Activated CD4-positive, alpha-beta memory T cell treated with anti-CD3 and anti-CD28 coated beads, Interleukin-2, amount 10 ng/mL, durations not matched to agents 7 days and 5 days (primary cell): ENCODE measurements at regions of chr1 and their contacts with region 1.

Region 1: GRCh38 chr1:52683367-52683940 is 14.7 kb downstream of the COA7 start:
- DNase-seq: no peak
- H3K4me3 Mint-ChIP-seq: no peak overlapping the region
- H3K27ac Mint-ChIP-seq: peak overlapping the region; percentile 0
- H3K4me1 Mint-ChIP-seq: peaks cover 16% of the 10 kb centered on the region
- H3K27me3 Mint-ChIP-seq: no peaks in the 10 kb centered on the region

Region 2: DNA sequence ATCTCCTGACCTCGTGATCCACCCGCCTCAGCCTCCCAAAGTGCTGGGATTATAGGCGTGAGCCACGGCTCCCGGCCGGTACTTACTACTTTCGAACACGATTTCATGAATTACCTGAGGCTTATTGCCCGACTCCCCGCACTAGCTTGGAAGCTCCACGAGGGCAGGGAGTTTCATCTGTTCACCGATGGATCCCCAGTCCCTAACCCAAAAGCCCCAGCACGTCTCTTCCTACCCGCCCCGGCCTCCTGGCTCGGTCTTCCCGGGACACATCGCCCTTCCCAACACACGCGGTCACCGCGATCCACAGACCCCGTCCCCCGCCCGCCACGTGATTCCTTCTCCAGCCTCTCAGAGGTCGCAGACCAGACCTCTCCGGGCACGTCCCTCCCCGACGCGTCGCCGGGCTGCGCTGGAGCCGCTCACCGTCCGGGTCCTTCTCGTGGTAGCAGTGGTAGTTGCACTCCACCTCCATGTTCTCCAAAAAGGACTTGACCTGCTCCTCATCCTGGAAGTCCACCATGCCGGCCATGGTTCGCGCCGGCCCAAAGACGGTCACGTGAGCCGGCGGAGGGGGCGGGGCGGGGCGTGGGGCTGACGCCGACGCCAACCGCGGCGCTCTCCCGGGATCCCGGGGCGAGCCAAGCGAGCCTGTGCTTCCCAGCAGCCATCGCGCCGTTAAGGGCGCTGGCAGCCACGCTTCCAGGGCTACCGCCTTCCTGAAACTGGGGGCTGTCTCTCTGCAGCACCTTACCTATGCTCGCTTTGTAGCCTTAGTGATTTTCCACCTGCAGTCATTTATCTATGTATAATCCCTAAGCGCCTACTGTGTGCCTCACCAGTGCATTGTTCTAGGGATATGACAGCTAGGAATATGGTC is 14.6 kb after region 1 on chr1 and contains the start of gene COA7:
- CTCF ChIA-PET with region 1: interaction called, 21 read pairs
- POLR2A ChIA-PET with region 1: interaction called, 4 read pairs
- DNase-seq: peak; percentile 74
- H3K4me3 Mint-ChIP-seq: peak within 1 kb of the TSS; percentile 91
- H3K27ac Mint-ChIP-seq: peak within 1 kb of the TSS; percentile 84
- H3K4me1 Mint-ChIP-seq: peaks cover 38% of the 10 kb centered on the region
- H3K27me3 Mint-ChIP-seq: peaks cover 3% of the 10 kb centered on the region
- total RNA-seq, gene COA7: 13.6 TPM

Region 3: DNA sequence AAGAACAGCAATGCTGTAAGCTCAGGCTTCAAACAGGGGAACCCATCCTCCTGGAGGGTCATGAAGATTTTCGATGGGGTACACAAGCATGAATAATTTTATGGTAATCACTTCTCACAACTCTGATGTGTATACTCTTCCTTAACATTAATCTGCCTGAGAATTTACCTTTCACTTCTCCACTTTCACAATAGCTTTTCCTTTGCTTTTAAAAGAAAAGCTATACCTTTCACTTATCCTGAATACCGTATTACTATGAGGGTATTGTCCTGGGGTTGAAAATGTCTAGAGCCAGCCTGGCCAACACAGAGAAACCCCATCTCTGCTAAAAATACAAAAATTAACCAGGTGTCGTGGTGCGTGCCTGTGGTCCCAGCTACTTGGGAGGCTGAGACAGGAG is 30.1 kb after region 1 on chr1:
- CTCF ChIA-PET with region 1: no interaction called
- POLR2A ChIA-PET with region 1: no interaction called
- DNase-seq: no peak
- H3K4me3 Mint-ChIP-seq: no peak overlapping the region
- H3K27ac Mint-ChIP-seq: no peak overlapping the region
- H3K4me1 Mint-ChIP-seq: peaks cover 7% of the 10 kb centered on the region
- H3K27me3 Mint-ChIP-seq: peaks cover 2% of the 10 kb centered on the region